Lower leg skin (tissue), 4 donors: ENCODE measurements at regions of chr18 and their contacts with region 1.

Region 1: GRCh38 chr18:22977847-22978701 is 44.9 kb downstream of the RBBP8 start:
- DNase-seq: no peak
- H3K4me3 ChIP-seq: no peak overlapping the region
- CTCF ChIP-seq: no peak
- POLR2A ChIP-seq: no peak

Region 2: DNA sequence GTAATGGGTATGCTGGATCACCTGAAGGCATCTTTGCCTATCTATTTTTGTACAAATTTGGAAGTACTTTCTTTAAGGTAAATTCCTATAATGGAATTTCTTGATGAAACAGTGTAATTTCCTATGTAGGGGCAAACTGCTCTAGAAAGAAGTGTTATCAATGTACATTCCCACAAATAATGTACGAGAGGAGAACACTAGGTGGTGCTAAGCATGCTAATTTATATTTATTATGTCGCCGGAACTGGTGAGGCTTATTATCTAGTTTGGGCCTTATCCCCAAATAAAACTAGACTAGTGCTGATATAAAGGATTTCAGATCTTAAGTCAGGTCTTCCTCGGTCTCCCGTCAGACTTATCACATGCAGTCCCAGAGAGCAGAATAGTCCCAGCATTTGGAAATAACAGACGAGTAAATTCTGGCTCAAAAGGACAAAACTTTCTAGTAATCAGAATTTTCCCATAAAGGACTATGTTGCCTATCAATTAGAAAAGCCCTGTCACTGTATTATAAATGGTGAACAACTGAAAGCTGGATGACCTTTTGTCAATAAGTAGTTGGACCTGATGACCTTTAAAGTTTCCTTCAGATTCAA is 131.9 kb before region 1 on chr18:
- intact Hi-C with region 1: loop called (anchors 10 kb)
- DNase-seq: no peak
- H3K4me3 ChIP-seq: no peak overlapping the region
- CTCF ChIP-seq: no peak
- POLR2A ChIP-seq: no peak